Endothelial cell of umbilical vein (primary cell): ENCODE measurements at regions of chr6 and their contacts with region 1.

Region 1: DNA sequence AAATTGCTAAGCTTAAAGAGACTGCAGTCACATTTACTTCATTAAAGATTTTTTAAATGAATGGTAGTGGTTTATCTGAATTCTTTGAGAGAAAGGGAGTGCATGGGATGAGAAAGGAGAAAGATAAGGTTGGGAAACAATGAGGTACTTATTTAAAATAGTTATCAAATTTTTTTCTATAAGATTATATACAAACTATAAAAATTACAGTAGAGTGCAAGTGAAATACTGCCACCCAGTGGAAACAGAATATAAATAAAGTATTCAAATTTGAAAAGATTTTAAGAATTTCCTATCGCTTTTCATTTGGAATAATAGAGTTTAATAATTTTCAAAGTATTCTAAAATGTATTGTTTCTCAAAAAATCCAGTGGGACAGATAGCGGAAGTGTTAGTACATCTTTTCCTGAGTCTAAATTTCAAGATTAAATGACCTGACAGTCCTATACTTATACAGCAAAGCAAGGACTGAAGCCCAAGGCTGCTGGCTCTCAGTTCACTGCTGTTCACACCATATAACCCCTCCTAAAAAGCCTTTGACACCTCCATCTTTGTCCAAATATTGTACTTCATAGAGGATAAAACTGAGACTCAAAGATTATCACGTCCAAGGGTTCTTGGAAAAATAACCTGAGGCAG is 31.1 kb downstream of the EPM2A start:
- DNase-seq: peak; percentile 54
- H3K4me3 ChIP-seq: no peak overlapping the region
- H3K27ac ChIP-seq: no peak overlapping the region
- H3K4me1 ChIP-seq: peaks cover 30% of the 10 kb centered on the region
- H3K27me3 ChIP-seq: no peaks in the 10 kb centered on the region
- CTCF ChIP-seq: peak; percentile 13 to 20
- POLR2A ChIP-seq: no peak

Region 2: DNA sequence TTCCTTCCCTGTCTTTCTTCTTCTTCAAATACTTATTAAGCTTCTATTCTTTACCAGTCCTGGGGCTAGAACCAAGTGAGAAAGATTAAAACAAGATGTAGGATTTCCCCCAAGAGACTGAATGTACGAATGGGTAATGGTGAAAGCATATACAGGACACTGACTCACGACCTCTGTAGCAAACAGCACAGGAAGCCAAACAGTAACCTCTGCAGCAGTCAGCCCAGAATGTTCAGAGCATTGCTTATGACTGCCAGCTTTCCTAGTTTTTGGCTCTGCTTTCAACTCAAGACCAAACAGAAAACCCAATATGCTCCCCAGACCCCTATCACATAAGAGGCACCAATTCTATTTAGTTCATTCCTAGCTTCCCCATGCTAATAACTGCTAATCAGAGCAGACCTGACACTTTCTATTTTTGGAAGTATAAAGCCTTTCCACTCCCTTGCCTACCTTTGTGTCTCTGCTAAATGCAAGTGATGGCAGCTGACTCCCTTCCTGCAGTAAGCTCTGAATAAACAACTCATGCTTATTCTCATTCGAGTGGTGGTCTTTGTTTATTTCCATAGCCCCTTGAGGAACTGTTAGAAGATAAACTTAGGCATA is 659.5 kb before region 1 on chr6:
- CTCF ChIA-PET with region 1: no interaction called
- POLR2A ChIA-PET with region 1: no interaction called
- dilution Hi-C with region 1: no loop called
- intact Hi-C with region 1: loop called (anchors 10 kb)
- DNase-seq: peak; percentile 68
- H3K4me3 ChIP-seq: no peak overlapping the region
- H3K27ac ChIP-seq: no peak overlapping the region
- H3K4me1 ChIP-seq: peaks cover 10% of the 10 kb centered on the region
- H3K27me3 ChIP-seq: no peaks in the 10 kb centered on the region
- CTCF ChIP-seq: no peak
- POLR2A ChIP-seq: no peak

Region 3: DNA sequence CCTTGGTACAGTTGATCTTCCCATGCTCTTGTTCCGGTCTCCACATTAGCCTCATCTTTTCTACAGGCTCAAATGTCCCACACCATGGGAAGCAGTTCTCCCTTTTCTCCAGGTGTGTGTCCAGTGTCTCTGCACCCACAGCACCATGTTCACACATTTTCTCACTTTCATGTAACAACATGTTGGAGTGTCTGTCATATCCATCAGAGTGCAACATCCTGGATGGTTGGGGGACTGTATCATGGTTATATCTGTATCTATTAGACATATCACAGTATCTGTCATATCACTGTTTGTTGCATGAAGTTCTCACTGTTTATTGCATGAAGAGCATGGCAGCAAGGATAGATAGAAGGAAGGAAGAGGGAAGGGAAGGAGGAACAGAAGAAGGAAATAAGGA is 604.5 kb before region 1 on chr6:
- CTCF ChIA-PET with region 1: no interaction called
- POLR2A ChIA-PET with region 1: no interaction called
- dilution Hi-C with region 1: no loop called
- intact Hi-C with region 1: no loop called
- DNase-seq: no peak
- H3K4me3 ChIP-seq: no peak overlapping the region
- H3K27ac ChIP-seq: no peak overlapping the region
- H3K4me1 ChIP-seq: no peaks in the 10 kb centered on the region
- H3K27me3 ChIP-seq: no peaks in the 10 kb centered on the region
- CTCF ChIP-seq: no peak
- POLR2A ChIP-seq: no peak

Region 4: DNA sequence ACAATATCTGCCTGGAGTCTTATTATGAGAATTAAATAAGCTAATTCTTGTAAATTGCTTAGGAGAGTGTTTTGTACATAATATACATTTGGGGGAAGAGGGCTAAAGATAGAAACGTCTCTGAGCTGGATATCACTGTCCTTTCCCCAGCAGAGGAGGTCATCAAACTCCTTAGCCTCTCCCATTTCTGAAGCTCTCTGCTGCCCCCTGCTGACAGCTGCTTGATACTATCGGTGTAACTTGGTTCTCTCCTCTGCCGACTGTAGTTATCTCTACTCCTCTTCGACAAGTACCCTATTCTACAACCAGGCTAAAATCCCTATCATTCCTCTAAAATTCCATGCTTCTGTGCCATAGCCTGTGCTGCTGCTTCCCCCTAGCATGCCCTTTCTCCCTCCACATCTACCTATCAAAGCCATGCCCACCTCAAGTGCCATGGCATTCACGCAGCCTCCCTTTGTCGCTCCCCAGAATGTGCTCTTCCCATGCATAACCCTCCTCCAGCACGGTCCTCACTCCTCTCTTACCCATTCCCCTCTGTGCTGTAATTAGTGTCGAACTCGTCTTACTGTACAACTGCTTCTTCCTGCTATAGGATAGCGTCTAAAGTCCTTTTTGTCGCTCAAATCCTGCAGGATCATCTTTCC is 70.2 kb before region 1 on chr6:
- CTCF ChIA-PET with region 1: interaction called, 83 read pairs
- POLR2A ChIA-PET with region 1: no interaction called
- dilution Hi-C with region 1: no loop called
- intact Hi-C with region 1: loop called (anchors 1 kb)
- DNase-seq: peak; percentile 78
- H3K4me3 ChIP-seq: no peak overlapping the region
- H3K27ac ChIP-seq: no peak overlapping the region
- H3K4me1 ChIP-seq: no peaks in the 10 kb centered on the region
- H3K27me3 ChIP-seq: no peaks in the 10 kb centered on the region
- CTCF ChIP-seq: peak; percentile 78 to 89
- POLR2A ChIP-seq: no peak

Region 5: DNA sequence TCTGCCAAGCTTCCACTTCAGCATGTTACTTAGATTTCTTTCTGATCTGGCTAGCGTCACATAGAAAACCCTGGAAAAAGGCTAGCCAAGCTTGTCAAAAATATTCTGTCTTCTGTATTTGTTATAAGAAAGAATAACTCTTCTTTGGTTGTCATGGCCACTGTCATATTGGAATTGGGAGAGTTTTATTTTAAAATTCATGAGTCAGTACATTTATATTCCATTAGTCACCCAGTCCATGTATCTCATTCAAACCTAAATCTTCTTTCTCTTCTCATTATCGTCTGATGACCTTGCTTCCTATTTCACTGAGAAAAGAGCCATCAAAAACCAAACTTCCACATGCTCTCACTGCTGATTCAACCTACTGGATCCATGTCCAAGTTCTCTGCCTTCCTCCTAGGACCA is 34.6 kb before region 1 on chr6:
- CTCF ChIA-PET with region 1: interaction called, 10 read pairs
- POLR2A ChIA-PET with region 1: no interaction called
- dilution Hi-C with region 1: no loop called
- intact Hi-C with region 1: loop called (anchors 2 kb)
- DNase-seq: peak; percentile 69
- H3K4me3 ChIP-seq: peak overlapping the region in 1 of 3 experiments; percentile 17
- H3K27ac ChIP-seq: peak overlapping the region; percentile 94
- H3K4me1 ChIP-seq: peaks cover 26% of the 10 kb centered on the region
- H3K27me3 ChIP-seq: no peaks in the 10 kb centered on the region
- CTCF ChIP-seq: no peak
- POLR2A ChIP-seq: no peak

Region 6: GRCh38 chr6:145722190-145722589 is 17.9 kb after region 1 on chr6:
- CTCF ChIA-PET with region 1: interaction called, 12 read pairs
- POLR2A ChIA-PET with region 1: no interaction called
- dilution Hi-C with region 1: no loop called
- intact Hi-C with region 1: no loop called
- DNase-seq: no peak
- H3K4me3 ChIP-seq: no peak overlapping the region
- H3K27ac ChIP-seq: no peak overlapping the region
- H3K4me1 ChIP-seq: no peaks in the 10 kb centered on the region
- H3K27me3 ChIP-seq: no peaks in the 10 kb centered on the region
- CTCF ChIP-seq: no peak
- POLR2A ChIP-seq: no peak

Region 7: DNA sequence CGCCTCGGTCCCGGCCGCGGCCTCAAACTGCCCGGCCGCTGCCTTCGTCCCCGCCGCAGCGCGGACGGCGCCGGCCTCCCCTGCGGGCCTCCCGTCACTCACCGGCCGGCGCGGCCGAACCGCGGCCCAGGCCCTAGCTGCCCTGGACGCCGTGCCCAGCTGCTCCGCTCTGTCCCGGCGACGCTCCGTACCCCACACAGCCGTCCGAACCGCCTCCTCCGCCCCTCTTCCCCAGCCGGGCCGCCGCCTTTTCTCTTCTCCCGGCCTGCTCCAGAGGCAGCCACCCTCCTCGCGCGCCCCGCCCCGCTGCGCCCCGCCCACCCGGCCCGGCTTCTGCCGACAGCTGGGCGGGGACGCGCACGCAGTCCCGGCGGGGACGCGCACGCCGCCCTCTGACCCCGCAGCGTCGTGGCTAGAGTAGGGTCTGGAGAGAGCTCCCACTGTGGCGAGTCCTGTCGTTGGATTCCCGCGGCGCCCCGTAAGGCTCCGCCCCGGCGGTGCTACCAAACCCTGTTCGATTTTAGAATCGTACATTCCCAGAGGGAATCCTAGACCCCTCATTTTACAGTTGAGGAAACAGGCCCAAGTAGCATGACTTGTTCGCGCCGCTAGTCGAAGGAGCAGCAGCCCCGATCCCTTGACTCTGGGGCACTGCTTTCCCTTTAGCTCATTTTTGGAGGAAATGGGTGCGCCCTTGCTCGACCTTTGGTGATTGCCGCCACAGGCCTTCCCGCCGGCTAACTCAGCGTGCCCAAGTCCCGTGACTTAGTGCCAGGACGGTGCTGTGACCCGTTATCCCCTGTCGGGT is 110.4 kb after region 1 on chr6 and contains the start of gene FBXO30:
- CTCF ChIA-PET with region 1: interaction called, 8 read pairs
- POLR2A ChIA-PET with region 1: interaction called, 3 read pairs
- dilution Hi-C with region 1: no loop called
- intact Hi-C with region 1: loop called (anchors 1 kb)
- DNase-seq: peak; percentile 95
- H3K4me3 ChIP-seq: peak within 1 kb of the TSS; percentile 56 to 95 (median 90)
- H3K27ac ChIP-seq: peak within 1 kb of the TSS; percentile 83
- H3K4me1 ChIP-seq: peaks cover 28% of the 10 kb centered on the region
- H3K27me3 ChIP-seq: no peaks in the 10 kb centered on the region
- CTCF ChIP-seq: no peak
- POLR2A ChIP-seq: peak; percentile 71
- total RNA-seq, gene FBXO30: 10.4 and 11.1 TPM in 2 replicates